ENCODE measurements at regions of chr1 and their contacts with region 1.

Region 1: DNA sequence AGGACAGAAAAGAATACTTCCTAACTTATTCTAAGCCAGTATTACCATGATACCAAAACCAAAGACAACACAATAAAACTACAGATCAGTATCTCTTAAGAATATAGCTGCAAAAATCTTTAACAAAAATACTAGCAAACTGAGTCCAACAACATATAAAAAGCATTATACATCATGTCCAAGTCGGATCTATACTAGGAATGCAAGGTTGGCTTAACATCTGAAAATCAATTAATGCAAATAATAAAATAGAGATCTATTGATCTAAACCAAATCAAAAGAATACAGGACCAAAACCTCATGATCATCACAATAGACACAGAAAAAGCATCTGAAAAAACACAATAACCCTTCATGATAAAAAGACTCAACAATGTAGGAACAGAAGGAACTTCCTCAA is 18.9 kb downstream of the TAF1A start:
- DNase-seq: no peak
- ATAC-seq: no peak
- H3K4me3 ChIP-seq: no peak overlapping the region
- H3K27ac ChIP-seq: no peak overlapping the region
- H3K4me1 ChIP-seq: no peaks in the 10 kb centered on the region
- H3K27me3 ChIP-seq: no peaks in the 10 kb centered on the region
- CTCF ChIP-seq: no peak
- EP300 ChIP-seq: no peak
- POLR2A ChIP-seq: no peak
- RAD21 ChIP-seq: no peak

Region 2: DNA sequence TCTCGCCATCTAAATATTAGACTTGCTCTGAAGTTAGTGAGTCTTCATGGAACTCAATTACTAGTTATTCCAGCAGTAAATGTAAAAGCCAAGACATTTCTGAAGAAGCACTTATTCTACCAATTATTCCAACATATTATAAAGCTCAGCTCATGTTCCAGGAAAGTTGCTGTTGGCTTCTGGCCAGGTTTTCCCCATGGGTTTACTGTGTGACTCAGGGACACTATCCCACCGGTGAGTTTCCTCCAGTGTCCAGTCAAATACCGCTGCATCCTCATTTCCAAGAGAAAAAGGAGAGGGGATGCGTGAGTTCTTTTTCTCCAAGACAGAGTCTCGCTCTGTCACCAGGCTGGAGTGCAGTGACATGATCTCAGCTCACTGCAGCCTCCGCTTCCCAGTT is 13.7 kb before region 1 on chr1:
- CTCF ChIA-PET with region 1: interaction called, 3 read pairs
- POLR2A ChIA-PET with region 1: interaction called, 4 read pairs
- RAD21 ChIA-PET with region 1: no interaction called
- SMC1A ChIA-PET with region 1: interaction called, 12 read pairs
- in situ Hi-C with region 1: no loop called
- intact Hi-C with region 1: no loop called
- DNase-seq: no peak
- ATAC-seq: no peak
- H3K4me3 ChIP-seq: no peak overlapping the region
- H3K27ac ChIP-seq: no peak overlapping the region
- H3K4me1 ChIP-seq: no peaks in the 10 kb centered on the region
- H3K27me3 ChIP-seq: no peaks in the 10 kb centered on the region
- CTCF ChIP-seq: no peak
- EP300 ChIP-seq: no peak
- POLR2A ChIP-seq: no peak
- RAD21 ChIP-seq: no peak

Region 3: GRCh38 chr1:222829868-222830267 is 259.0 kb after region 1 on chr1:
- CTCF ChIA-PET with region 1: no interaction called
- POLR2A ChIA-PET with region 1: no interaction called
- RAD21 ChIA-PET with region 1: no interaction called
- SMC1A ChIA-PET with region 1: no interaction called
- in situ Hi-C with region 1: no loop called
- intact Hi-C with region 1: no loop called
- DNase-seq: no peak
- ATAC-seq: no peak
- H3K4me3 ChIP-seq: no peak overlapping the region
- H3K27ac ChIP-seq: no peak overlapping the region
- H3K4me1 ChIP-seq: no peaks in the 10 kb centered on the region
- H3K27me3 ChIP-seq: no peaks in the 10 kb centered on the region
- CTCF ChIP-seq: no peak
- EP300 ChIP-seq: no peak
- POLR2A ChIP-seq: no peak
- RAD21 ChIP-seq: no peak

Measured in GM12878 (cell line).